ENCODE measurements at regions of chr3 and their contacts with region 1.

Region 1: DNA sequence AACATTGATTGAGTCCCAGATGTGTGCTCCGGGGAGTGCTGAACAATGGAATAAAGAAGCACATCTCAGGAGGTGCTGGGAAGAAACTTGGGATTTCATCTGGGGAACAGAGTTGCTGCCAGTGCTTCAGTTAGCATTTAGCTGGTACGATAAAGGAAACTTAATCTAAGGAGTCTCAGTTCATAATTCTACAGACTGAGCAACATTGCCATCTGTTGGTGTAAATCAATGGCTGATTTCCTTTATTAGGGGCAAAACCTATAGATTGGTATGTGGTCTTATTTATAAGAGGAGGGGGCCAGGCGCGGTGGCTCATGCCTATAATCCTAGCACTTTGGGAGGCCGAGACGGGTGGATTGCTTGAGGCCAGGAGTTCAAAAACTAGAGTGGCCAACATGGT is 8.9 kb downstream of the MKRN2OS start:
- DNase-seq: no peak
- H3K4me3 ChIP-seq: no peak overlapping the region
- H3K27ac ChIP-seq: no peak overlapping the region
- H3K4me1 ChIP-seq: peaks cover 17% of the 10 kb centered on the region
- H3K27me3 ChIP-seq: no peaks in the 10 kb centered on the region
- CTCF ChIP-seq: 0 out of 2 replicates have a peak, but pooled peaks have one; percentile 24

Region 2: DNA sequence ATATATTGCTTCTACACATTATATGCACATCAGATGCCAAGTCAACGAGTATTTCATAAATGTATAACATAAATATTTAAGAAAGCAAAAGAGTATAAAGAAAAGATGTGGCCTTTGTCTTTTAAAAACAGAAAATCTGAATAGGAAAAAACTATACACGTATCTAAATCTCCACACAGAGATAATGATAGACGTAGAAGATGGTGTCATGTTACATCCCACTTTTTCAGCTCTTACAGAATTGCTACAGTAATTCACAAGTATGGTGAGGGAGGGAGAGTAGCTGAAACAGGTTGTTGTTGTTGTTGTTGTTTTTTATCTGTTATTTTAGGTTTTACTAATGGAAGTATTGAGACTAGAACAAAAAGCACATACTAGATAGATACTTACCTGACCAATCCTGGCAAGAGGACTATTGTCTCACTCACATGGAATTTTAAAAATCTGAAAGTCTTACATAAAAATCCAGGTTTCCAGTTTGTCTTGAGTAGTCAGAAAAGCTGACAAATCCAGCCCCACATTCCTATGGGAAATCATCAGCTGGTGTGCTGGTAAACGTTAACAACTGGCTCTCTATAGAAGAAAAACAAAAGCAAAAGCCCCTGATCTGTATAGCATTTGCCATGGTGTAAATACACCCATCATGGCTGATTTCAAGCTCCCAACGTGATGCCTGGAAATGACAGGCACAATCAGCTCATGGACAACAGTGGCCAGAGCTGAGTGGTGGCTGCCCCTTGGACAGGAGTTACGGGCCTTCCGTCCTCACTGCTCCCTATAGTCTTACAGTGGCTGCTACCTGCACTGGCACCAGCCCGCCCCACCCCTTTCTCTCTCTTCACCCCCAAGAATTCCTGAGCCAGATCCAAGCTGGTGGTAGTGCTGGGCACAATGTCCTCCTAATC is 845.3 kb before region 1 on chr3:
- CTCF ChIA-PET with region 1: interaction called, 14 read pairs
- POLR2A ChIA-PET with region 1: no interaction called
- intact Hi-C with region 1: no loop called
- DNase-seq: peak; percentile 27 to 73
- H3K4me3 ChIP-seq: no peak overlapping the region
- H3K27ac ChIP-seq: peak overlapping the region; percentile 65
- H3K4me1 ChIP-seq: peaks cover 20% of the 10 kb centered on the region
- H3K27me3 ChIP-seq: no peaks in the 10 kb centered on the region
- CTCF ChIP-seq: no peak

Region 3: DNA sequence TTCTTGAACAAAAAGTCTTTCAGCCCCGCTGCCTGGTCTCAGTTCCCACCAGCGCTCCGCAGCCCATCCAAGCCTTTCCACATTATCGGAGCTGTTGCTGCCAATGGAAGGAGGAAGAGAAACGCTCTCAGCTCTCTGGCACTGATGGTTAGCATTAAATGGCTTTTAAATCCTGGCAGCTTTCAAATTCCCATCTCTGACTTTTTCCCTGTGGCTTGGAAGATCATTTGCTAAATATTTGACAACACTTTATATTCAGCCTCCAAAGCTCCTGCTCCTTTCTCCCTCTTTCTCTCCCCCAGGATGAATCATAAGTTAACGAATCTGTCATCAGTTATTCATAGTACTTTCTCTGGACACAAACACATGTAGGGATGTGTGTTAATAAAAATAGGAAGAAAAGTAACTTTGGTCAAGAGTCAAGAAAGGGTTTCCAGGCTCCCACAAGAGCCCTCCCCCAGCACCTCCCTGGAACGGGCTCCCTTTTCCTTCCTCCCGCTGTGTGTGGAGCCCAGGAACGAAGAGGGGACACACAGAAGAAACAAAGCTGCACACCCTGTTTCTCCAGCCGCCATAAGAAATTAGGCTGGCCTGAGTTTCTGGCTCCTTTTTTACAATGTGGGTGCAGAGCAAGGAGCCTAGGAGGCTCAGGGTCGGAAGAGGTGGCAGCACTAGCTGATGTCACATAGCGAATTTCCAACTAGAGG is 99.8 kb before region 1 on chr3:
- CTCF ChIA-PET with region 1: interaction called, 16 read pairs
- POLR2A ChIA-PET with region 1: no interaction called
- intact Hi-C with region 1: no loop called
- DNase-seq: no peak
- H3K4me3 ChIP-seq: no peak overlapping the region
- H3K27ac ChIP-seq: peak overlapping the region; percentile 31; the same call in 1 of the 2 replicates
- H3K4me1 ChIP-seq: peaks cover 6% of the 10 kb centered on the region
- H3K27me3 ChIP-seq: no peaks in the 10 kb centered on the region
- CTCF ChIP-seq: no peak

Region 4: DNA sequence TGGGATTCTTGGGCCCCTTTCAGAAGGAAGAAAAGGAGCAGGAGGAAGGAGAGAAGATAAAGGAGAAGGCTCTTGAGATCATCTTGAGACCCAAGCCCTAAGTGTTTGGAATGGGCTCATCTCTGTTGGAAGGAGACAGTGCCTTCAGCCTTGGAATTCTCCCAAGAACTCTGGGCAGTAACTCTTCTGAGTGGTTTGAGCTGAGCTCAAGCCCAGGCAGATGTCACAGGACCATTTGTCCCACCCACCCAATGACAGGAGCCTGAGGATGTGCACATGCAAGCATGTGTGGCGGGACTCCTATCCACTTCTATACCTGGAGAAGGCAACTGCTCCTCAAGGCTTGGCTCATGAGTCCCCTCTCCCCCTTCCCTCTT is 237.3 kb after region 1 on chr3:
- CTCF ChIA-PET with region 1: no interaction called
- POLR2A ChIA-PET with region 1: interaction called, 13 read pairs
- intact Hi-C with region 1: no loop called
- DNase-seq: no peak
- H3K4me3 ChIP-seq: no peak overlapping the region
- H3K27ac ChIP-seq: no peak overlapping the region
- H3K4me1 ChIP-seq: no peaks in the 10 kb centered on the region
- H3K27me3 ChIP-seq: no peaks in the 10 kb centered on the region
- CTCF ChIP-seq: no peak